ENCODE measurements at regions of chr7 and their contacts with region 1.

Region 1: GRCh38 chr7:100556541-100556940 is 17.2 kb downstream of the SAP25 start:
- DNase-seq: no peak
- ATAC-seq: no peak
- H3K4me3 ChIP-seq: no peak overlapping the region
- H3K27ac ChIP-seq: no peak overlapping the region
- H3K4me1 ChIP-seq: no peaks in the 10 kb centered on the region; the same call in 1 of the 2 replicates
- H3K27me3 ChIP-seq: no peaks in the 10 kb centered on the region
- CTCF ChIP-seq: no peak
- EP300 ChIP-seq: no peak
- POLR2A ChIP-seq: no peak
- RAD21 ChIP-seq: no peak

Region 2: GRCh38 chr7:100456558-100456957 is 100.0 kb before region 1 on chr7:
- CTCF ChIA-PET with region 1: interaction called, 13 read pairs
- POLR2A ChIA-PET with region 1: no interaction called
- RAD21 ChIA-PET with region 1: interaction called, 9 read pairs
- SMC1A ChIA-PET with region 1: interaction called, 4 read pairs
- in situ Hi-C with region 1: no loop called
- intact Hi-C with region 1: no loop called
- DNase-seq: no peak
- ATAC-seq: no peak
- H3K4me3 ChIP-seq: no peak overlapping the region
- H3K27ac ChIP-seq: no peak overlapping the region
- H3K4me1 ChIP-seq: no peaks in the 10 kb centered on the region; the same call in 1 of the 2 replicates
- H3K27me3 ChIP-seq: no peaks in the 10 kb centered on the region
- CTCF ChIP-seq: no peak
- EP300 ChIP-seq: no peak
- POLR2A ChIP-seq: no peak
- RAD21 ChIP-seq: no peak

Region 3: DNA sequence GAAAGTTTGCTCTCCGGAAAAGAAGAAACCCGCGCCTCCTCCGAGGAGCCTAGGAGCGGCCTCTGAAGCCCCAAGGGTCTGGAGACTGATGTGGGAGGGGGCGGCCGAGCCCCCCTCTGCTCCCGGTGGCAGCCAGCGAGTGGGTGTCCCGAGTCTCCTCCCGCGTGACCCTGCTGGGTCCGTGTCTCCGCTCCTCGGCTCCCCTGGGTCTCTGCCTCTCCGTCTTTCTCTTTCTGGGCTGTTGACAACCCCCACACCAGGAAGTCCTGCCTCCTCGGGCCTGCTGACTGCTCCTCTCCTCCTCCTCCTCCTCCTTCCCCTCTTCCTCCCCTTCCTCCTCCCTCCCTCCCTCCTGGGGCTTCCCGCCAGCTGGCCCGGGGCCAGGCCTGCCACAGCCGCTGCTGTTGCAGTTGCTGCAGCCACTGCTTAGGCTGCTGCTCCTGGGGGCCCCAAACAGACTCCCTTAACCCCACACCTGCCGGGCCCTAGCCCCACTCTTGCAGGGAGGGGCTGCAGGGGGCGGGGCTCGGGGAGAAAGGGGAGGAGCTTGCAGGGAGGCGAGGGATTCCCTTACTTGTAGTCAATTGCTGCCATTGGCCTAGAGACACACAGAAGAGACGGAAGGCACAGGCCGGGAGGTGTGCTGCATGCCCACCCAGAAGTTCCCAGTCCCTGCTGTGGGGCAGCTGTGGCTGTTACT is 77.4 kb before region 1 on chr7 and contains the start of gene TSC22D4:
- CTCF ChIA-PET with region 1: interaction called, 49 read pairs
- POLR2A ChIA-PET with region 1: interaction called, 12 read pairs
- RAD21 ChIA-PET with region 1: interaction called, 13 read pairs
- SMC1A ChIA-PET with region 1: interaction called, 12 read pairs
- in situ Hi-C with region 1: loop called (anchors 5 kb)
- intact Hi-C with region 1: no loop called
- DNase-seq: peak; percentile 79
- ATAC-seq: peak; percentile 85
- H3K4me3 ChIP-seq: peak within 1 kb of the TSS; percentile 99
- H3K27ac ChIP-seq: peak within 1 kb of the TSS; percentile 89
- H3K4me1 ChIP-seq: peaks cover 27% of the 10 kb centered on the region
- H3K27me3 ChIP-seq: no peaks in the 10 kb centered on the region
- CTCF ChIP-seq: no peak
- EP300 ChIP-seq: no peak
- POLR2A ChIP-seq: peak; percentile 87
- RAD21 ChIP-seq: no peak
- polyA plus RNA-seq, gene TSC22D4: 0.50 to 1.2 TPM

Region 4: DNA sequence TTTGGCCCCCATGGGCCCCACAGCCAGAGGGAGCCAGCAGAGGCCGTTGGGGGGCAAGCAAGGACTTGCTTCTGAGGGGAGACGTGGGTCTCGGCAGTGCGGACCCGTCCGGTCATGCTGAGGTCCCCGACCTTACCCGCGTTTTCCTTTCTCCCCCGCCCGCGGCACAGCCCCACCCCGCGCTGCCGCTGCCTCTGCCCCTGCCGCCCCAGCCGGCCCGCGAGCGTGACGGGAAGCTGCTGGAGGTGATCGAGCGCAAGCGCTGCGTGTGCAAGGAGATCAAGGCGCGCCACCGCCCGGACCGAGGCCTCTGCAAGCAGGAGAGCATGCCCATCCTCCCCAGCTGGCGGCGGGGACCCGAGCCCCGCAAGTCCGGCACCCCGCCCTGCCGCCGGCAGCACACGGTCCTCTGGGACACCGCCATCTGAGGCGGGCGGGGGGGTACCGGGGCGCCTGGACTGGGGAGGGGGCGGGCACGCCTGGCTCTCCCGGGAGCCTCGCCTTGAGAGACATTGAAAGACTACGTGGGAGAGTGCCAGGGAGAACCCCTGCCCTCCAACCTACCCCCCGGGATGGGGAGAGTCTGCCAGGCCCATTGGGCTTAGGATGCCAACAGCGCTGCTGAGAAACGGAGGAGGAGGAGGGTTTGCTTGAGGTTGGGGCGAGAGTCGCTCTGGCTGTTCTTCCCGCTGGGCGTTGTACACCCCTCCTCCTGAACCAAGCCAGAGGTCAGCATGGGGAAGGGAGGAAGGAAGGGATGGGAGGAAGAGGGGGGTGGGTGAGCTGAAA is 62.9 kb before region 1 on chr7:
- CTCF ChIA-PET with region 1: interaction called, 16 read pairs
- POLR2A ChIA-PET with region 1: no interaction called
- RAD21 ChIA-PET with region 1: interaction called, 12 read pairs
- SMC1A ChIA-PET with region 1: interaction called, 14 read pairs
- in situ Hi-C with region 1: no loop called
- intact Hi-C with region 1: no loop called
- DNase-seq: no peak
- ATAC-seq: peak; percentile 82
- H3K4me3 ChIP-seq: peak overlapping the region; percentile 53
- H3K27ac ChIP-seq: no peak overlapping the region
- H3K4me1 ChIP-seq: 0 out of 2 replicates have a peak, but pooled peaks cover 4% of the 10 kb centered on the region
- H3K27me3 ChIP-seq: no peaks in the 10 kb centered on the region
- CTCF ChIP-seq: peak in 2 of 3 experiments; percentile 16 to 37; a peak in 3 of 6 replicates
- EP300 ChIP-seq: no peak
- POLR2A ChIP-seq: peak; percentile 27; the same call in 1 of the 2 replicates
- RAD21 ChIP-seq: peak; percentile 43; the same call in 1 of the 2 replicates

Region 5: DNA sequence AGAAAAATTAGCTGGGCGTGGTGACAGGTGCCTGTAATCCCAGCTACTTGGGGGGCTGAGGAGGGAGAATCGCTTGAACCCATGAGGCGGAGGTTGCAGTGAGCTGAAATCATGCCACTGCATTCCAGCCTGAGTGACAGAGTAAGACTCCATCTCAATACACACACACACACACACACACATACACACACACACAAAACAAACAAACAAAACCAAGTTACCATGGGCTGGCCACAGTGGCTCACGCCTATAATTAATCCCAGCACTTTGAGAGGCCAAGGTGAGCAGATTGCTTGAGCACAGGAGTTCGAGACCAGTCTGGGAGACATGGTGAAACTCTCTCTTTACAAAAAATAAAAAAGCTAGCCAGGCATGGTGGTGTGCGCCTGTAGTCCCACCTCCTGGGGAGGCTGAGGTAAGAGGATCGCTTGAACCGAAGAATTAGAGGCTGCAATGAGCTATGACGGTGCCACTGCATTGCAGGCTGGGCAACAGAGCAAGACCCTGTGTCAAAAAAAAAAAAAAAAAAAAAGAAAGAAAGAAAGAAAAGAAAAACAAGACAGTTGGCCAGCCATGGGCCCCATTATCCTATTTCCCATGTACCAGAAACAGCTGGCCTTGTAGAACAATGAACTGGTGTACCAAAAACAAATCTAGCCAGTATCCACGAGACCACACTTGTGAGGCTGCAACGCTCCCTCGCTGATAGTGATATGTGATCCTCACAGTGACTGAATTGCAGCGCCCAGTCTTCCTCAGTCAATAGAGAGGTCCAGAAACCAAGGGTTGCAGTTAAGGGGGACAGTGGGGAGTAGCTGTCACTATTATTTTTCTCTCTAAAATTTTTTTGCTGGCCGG is 24.1 kb before region 1 on chr7:
- CTCF ChIA-PET with region 1: interaction called, 10 read pairs
- POLR2A ChIA-PET with region 1: interaction called, 3 read pairs
- RAD21 ChIA-PET with region 1: interaction called, 13 read pairs
- SMC1A ChIA-PET with region 1: interaction called, 7 read pairs
- in situ Hi-C with region 1: no loop called
- intact Hi-C with region 1: no loop called
- DNase-seq: no peak
- ATAC-seq: no peak
- H3K4me3 ChIP-seq: no peak overlapping the region
- H3K27ac ChIP-seq: no peak overlapping the region
- H3K4me1 ChIP-seq: peaks cover 10% of the 10 kb centered on the region
- H3K27me3 ChIP-seq: no peaks in the 10 kb centered on the region
- CTCF ChIP-seq: no peak
- EP300 ChIP-seq: no peak
- POLR2A ChIP-seq: no peak
- RAD21 ChIP-seq: no peak

Region 6: DNA sequence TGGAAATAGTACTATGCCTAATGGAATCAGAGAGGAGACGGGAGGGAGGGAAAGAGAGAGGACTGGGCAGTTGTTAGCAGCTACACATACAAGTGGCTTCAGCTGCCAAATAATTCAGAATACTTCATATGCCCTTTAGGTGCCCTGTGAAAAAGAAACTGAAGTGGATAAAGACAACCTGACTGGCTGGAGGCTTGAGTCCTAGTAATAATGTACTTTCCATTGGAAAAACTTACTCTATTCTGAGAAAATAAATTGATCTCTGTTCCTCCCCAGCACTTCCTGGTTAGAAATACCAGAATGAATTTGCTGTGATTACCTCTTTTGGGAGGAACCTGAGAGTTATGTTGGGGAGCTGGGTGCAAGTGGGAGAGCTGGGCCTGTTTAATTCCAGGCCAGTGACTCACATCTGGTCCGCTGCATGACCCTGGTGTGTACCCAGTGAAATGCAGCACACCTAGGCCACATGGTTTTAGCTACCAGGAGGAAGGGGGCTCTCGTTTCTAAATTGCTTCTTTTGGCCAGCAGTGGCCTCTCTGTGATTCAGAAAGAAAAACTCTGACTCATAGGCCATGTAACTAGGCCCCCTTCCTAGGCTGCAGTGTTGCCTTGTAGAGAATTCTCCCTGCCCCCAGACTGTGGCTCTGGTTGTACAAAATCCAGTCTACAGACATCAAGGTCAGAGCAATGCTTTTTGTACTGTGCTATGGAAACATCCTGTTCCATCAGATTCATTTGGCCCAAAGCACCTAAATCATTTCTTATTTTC is 11.0 kb before region 1 on chr7:
- CTCF ChIA-PET with region 1: interaction called, 101 read pairs
- POLR2A ChIA-PET with region 1: interaction called, 13 read pairs
- RAD21 ChIA-PET with region 1: interaction called, 90 read pairs
- SMC1A ChIA-PET with region 1: interaction called, 127 read pairs
- in situ Hi-C with region 1: no loop called
- intact Hi-C with region 1: no loop called
- DNase-seq: peak; percentile 83
- ATAC-seq: peak; percentile 76
- H3K4me3 ChIP-seq: peak overlapping the region; percentile 56
- H3K27ac ChIP-seq: peak overlapping the region; percentile 99
- H3K4me1 ChIP-seq: peaks cover 75% of the 10 kb centered on the region
- H3K27me3 ChIP-seq: no peaks in the 10 kb centered on the region
- CTCF ChIP-seq: peak; percentile 9 to 26 (median 18); a peak in 2 of 6 replicates
- EP300 ChIP-seq: peak in 1 of 2 experiments; percentile 75; a peak in 3 of 4 replicates
- POLR2A ChIP-seq: peak; percentile 63
- RAD21 ChIP-seq: peak; percentile 40; the same call in 1 of the 2 replicates